IMR-90 (cell line): ENCODE measurements at regions of chr11 and their contacts with region 1.

Region 1: GRCh38 chr11:65591924-65592857 is 3.4 kb downstream of the KCNK7 start:
- DNase-seq: peak; percentile 44
- ATAC-seq: peak; percentile 18
- H3K4me3 ChIP-seq: no peak overlapping the region
- H3K27ac ChIP-seq: no peak overlapping the region
- H3K4me1 ChIP-seq: peaks cover 4% of the 10 kb centered on the region
- H3K27me3 ChIP-seq: no peaks in the 10 kb centered on the region
- CTCF ChIP-seq: no peak
- POLR2A ChIP-seq: no peak
- RAD21 ChIP-seq: no peak

Region 2: GRCh38 chr11:65487413-65488272 is 104.5 kb before region 1 on chr11:
- CTCF ChIA-PET with region 1: no interaction called
- POLR2A ChIA-PET with region 1: no interaction called
- dilution Hi-C with region 1: no loop called
- in situ Hi-C with region 1: no loop called
- intact Hi-C with region 1: no loop called
- DNase-seq: peak; percentile 100
- ATAC-seq: peak; percentile 78
- H3K4me3 ChIP-seq: no peak overlapping the region
- H3K27ac ChIP-seq: peak overlapping the region; percentile 85
- H3K4me1 ChIP-seq: peaks cover 51% of the 10 kb centered on the region
- H3K27me3 ChIP-seq: no peaks in the 10 kb centered on the region
- CTCF ChIP-seq: no peak
- POLR2A ChIP-seq: peak; percentile 58; the same call in 1 of the 2 replicates
- RAD21 ChIP-seq: 0 out of 2 replicates have a peak, but pooled peaks have one; percentile 13

Region 3: GRCh38 chr11:65575568-65576231 is 16.5 kb before region 1 on chr11 and contains the start of gene EHBP1L1:
- CTCF ChIA-PET with region 1: no interaction called
- POLR2A ChIA-PET with region 1: no interaction called
- dilution Hi-C with region 1: no loop called
- in situ Hi-C with region 1: no loop called
- intact Hi-C with region 1: loop called (anchors 2 kb)
- DNase-seq: peak; percentile 28
- ATAC-seq: peak; percentile 26
- H3K4me3 ChIP-seq: peak within 1 kb of the TSS; percentile 85
- H3K27ac ChIP-seq: peak within 1 kb of the TSS; percentile 75
- H3K4me1 ChIP-seq: peaks cover 33% of the 10 kb centered on the region
- H3K27me3 ChIP-seq: no peaks in the 10 kb centered on the region
- CTCF ChIP-seq: no peak
- POLR2A ChIP-seq: no peak
- RAD21 ChIP-seq: no peak
- total RNA-seq, gene EHBP1L1: 10.0 and 13.3 TPM in 2 replicates